Endothelial cell of umbilical vein (primary cell): ENCODE measurements at regions of chr12 and their contacts with region 1.

Region 1: GRCh38 chr12:27293463-27293862 is 39.2 kb upstream of the BMAL2 start:
- DNase-seq: peak; percentile 62
- H3K4me3 ChIP-seq: no peak overlapping the region
- H3K27ac ChIP-seq: peak overlapping the region; percentile 87
- H3K4me1 ChIP-seq: peaks cover 44% of the 10 kb centered on the region
- H3K27me3 ChIP-seq: no peaks in the 10 kb centered on the region
- CTCF ChIP-seq: no peak
- POLR2A ChIP-seq: no peak

Region 2: DNA sequence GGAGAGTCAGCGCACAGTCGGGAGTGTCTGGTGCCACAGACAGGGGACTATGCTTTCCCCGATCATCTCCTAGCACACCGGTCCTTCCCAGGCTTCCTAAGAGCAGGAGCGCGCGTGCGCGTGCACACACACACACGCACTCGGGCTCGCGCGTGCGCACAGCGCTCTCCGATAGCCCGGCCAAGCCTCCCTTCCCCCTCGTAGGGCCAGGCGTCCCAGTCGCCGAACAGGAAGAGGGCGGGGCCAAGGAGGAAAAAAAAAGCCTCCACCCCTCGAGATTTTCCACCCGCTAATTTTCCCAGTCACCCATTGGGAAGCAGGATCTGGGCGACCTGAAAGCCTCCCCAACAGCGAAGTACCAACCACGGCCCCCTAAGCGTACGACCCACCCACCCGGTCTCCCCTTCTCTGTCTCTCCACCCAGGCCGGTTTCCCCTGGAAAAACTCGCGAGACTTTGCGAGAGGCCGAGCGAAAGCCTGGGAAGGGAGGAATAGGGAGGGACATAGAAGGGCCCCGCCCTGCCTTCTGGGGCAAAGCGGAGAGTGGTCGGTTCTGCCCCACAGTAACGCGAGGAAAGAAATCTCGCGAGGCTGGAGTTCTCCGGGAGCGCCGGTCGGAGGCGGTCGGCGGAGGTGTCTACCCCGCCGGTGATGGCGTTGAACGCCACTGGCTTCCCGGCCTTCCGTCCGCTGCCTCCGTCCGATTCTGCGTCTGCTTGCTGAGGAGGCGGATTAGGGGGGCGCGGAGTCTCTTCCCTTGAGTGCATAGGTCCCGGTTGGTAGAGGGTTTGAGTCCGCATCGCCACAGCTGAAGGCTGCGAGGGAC is 355.4 kb before region 1 on chr12 and contains the starts of genes FGFR1OP2 and INTS13:
- CTCF ChIA-PET with region 1: interaction called, 3 read pairs
- POLR2A ChIA-PET with region 1: no interaction called
- dilution Hi-C with region 1: no loop called
- intact Hi-C with region 1: loop called (anchors 10 kb)
- DNase-seq: peak; percentile 98
- H3K4me3 ChIP-seq: peak within 1 kb of the TSS; percentile 49 to 94 (median 91)
- H3K27ac ChIP-seq: peak within 1 kb of the TSS; percentile 82
- H3K4me1 ChIP-seq: peaks cover 49% of the 10 kb centered on the region
- H3K27me3 ChIP-seq: no peaks in the 10 kb centered on the region
- CTCF ChIP-seq: no peak
- POLR2A ChIP-seq: peak; percentile 90
- total RNA-seq, gene FGFR1OP2: 47.3 and 49.3 TPM in 2 replicates
- total RNA-seq, gene INTS13: 25.5 and 35.9 TPM in 2 replicates

Region 3: DNA sequence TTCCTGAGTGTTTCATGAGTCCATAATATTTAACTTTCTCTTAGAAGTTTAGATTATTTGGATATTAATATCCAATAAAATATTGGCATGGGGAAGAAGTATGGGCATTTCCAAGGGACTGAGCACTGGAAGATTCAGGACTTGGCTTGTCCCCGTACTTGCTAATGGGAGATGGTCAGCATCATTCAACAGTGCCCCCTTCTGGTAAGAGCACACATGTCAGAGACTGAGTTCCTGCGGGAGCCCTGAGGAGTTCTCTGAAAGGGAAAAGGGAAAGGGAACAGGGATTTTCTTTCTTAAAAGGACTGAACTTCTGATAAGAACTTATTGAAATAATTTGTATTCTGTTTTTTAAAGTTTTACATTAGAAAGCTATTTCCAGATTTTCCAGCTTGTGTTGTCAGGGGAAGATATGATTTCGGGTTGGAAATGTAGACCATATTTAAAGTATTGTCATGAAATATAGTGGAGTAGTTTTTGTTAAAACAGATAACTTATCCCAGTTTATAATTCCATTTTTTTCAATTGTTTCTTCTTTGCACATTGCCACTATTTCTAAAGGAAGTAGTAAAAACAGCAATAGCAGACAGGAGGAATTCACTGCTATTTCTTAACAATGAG is 151.3 kb before region 1 on chr12:
- CTCF ChIA-PET with region 1: no interaction called
- POLR2A ChIA-PET with region 1: no interaction called
- dilution Hi-C with region 1: no loop called
- intact Hi-C with region 1: loop called (anchors 5 kb)
- DNase-seq: peak; percentile 83
- H3K4me3 ChIP-seq: no peak overlapping the region
- H3K27ac ChIP-seq: no peak overlapping the region
- H3K4me1 ChIP-seq: peaks cover 2% of the 10 kb centered on the region
- H3K27me3 ChIP-seq: no peaks in the 10 kb centered on the region
- CTCF ChIP-seq: peak; percentile 79 to 86
- POLR2A ChIP-seq: no peak

Region 4: GRCh38 chr12:27179400-27180214 is 113.9 kb before region 1 on chr12:
- CTCF ChIA-PET with region 1: no interaction called
- POLR2A ChIA-PET with region 1: no interaction called
- dilution Hi-C with region 1: no loop called
- intact Hi-C with region 1: loop called (anchors 2 kb)
- DNase-seq: peak; percentile 89
- H3K4me3 ChIP-seq: no peak overlapping the region
- H3K27ac ChIP-seq: peak overlapping the region; percentile 72
- H3K4me1 ChIP-seq: peaks cover 44% of the 10 kb centered on the region
- H3K27me3 ChIP-seq: no peaks in the 10 kb centered on the region
- CTCF ChIP-seq: no peak
- POLR2A ChIP-seq: no peak